MCF 10A (cell line): ENCODE measurements at regions of chr9 and their contacts with region 1.

Region 1: DNA sequence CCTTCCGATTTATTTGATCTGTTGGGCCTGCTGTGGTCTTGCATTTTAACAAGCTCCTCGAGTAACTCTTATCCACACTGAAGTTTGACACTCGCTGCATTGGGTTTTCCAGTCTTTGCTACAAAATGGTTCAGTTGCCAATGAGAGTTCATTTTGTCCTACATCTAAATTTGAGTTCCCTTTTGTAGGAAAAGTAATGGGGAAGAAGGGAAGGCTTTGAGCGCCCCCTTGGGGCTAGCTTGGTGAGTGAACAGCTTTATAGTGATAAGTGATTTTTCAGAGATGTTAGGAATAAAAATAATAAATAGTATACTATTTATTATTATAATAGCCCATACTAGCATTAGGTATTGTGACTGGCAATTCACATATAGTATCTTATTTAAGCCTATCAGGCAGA is 89.9 kb upstream of the GNAQ start:
- DNase-seq: peak; percentile 80
- H3K4me3 Mint-ChIP-seq: no peak overlapping the region
- H3K27ac Mint-ChIP-seq: no peak overlapping the region
- H3K4me1 Mint-ChIP-seq: peaks cover 30% of the 10 kb centered on the region
- H3K27me3 Mint-ChIP-seq: no peaks in the 10 kb centered on the region
- CTCF ChIP-seq: peak; percentile 66

Region 2: DNA sequence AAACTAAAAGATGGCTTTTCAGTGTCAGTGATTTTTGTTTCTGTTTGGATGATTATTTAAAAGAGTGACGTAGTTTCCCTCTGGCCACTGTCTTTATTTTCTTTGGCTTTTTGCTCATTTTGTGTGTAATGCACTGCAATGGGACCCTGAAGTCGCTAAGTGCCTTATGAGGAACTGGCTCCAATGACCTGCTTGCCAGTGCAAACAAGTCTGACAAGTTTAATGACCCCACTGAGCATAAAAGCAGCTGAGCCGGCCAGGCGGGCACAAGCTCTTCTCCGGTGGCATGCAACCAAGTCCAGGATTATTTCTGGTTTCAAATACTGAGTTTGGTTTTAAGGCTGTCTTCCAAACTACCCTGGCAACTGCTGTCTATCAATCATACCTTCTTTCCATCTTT is 457.7 kb before region 1 on chr9:
- CTCF ChIA-PET with region 1: no interaction called
- POLR2A ChIA-PET with region 1: no interaction called
- intact Hi-C with region 1: no loop called
- DNase-seq: peak; percentile 6
- H3K4me3 Mint-ChIP-seq: no peak overlapping the region
- H3K27ac Mint-ChIP-seq: no peak overlapping the region
- H3K4me1 Mint-ChIP-seq: peaks cover 9% of the 10 kb centered on the region
- H3K27me3 Mint-ChIP-seq: no peaks in the 10 kb centered on the region
- CTCF ChIP-seq: no peak

Region 3: GRCh38 chr9:77841739-77842386 is 279.6 kb before region 1 on chr9:
- CTCF ChIA-PET with region 1: interaction called, 6 read pairs
- POLR2A ChIA-PET with region 1: no interaction called
- intact Hi-C with region 1: loop called (anchors 5 kb)
- DNase-seq: no peak
- H3K4me3 Mint-ChIP-seq: no peak overlapping the region
- H3K27ac Mint-ChIP-seq: no peak overlapping the region
- H3K4me1 Mint-ChIP-seq: peaks cover 13% of the 10 kb centered on the region
- H3K27me3 Mint-ChIP-seq: no peaks in the 10 kb centered on the region
- CTCF ChIP-seq: peak; percentile 29

Region 4: DNA sequence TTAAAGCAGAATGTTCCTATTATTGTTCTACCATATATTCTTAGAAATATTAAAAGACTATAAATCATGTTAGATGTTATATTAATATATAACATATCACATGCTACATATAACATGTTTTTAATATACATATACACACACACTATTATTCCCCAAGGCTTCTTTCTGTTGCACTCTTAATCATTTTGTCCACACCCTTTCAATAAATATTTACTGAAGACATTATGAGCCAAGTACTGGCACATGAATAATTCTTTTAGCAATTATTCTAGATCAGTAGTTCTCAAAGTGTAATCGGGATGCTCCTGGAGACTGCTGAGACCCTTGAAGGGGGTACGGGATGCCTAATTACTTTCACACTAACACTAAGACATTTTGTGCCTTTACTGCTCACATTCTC is 233.8 kb before region 1 on chr9:
- CTCF ChIA-PET with region 1: no interaction called
- POLR2A ChIA-PET with region 1: no interaction called
- intact Hi-C with region 1: no loop called
- DNase-seq: no peak
- H3K4me3 Mint-ChIP-seq: no peak overlapping the region
- H3K27ac Mint-ChIP-seq: no peak overlapping the region
- H3K4me1 Mint-ChIP-seq: peaks cover 23% of the 10 kb centered on the region
- H3K27me3 Mint-ChIP-seq: no peaks in the 10 kb centered on the region
- CTCF ChIP-seq: no peak

Region 5: DNA sequence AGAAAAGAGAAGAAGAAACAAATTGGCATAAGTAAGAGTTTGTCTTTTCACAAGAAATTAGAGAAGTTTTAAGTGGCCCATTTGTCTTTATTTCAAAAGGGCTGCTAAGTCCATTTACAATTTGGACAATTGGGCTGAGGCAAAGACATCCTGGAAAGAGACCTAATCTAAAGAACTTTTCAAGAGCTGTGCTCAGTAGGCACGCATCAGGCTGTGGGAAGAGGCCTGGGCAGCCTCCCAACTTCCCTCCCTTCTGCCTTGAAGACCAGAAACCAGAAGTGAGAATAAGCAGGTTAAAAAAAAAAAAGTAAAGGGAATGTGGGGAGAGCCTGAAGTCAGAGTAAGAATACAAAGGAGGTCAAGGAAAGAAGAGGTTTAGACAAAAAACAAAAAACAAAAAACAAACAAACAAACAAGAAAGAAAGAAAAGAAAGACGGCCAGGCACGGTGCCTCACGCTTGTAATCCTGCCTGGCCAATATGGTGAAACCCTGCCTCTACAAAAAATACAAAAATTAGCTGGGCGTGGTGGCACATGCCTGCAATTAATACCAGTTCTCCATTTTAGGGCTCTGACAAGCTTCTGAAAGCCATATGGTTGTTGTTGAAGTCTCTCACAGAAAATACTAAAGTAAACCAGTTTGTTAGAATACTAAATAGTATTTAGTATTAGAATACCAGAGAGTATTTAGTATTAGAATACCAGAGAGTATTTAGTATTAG is 66.4 kb after region 1 on chr9:
- CTCF ChIA-PET with region 1: no interaction called
- POLR2A ChIA-PET with region 1: no interaction called
- intact Hi-C with region 1: no loop called
- DNase-seq: no peak
- H3K4me3 Mint-ChIP-seq: no peak overlapping the region
- H3K27ac Mint-ChIP-seq: no peak overlapping the region
- H3K4me1 Mint-ChIP-seq: no peaks in the 10 kb centered on the region
- H3K27me3 Mint-ChIP-seq: no peaks in the 10 kb centered on the region
- CTCF ChIP-seq: no peak

Region 6: GRCh38 chr9:78230761-78231160 is 109.3 kb after region 1 on chr9:
- CTCF ChIA-PET with region 1: no interaction called
- POLR2A ChIA-PET with region 1: no interaction called
- intact Hi-C with region 1: no loop called
- DNase-seq: no peak
- H3K4me3 Mint-ChIP-seq: no peak overlapping the region
- H3K27ac Mint-ChIP-seq: no peak overlapping the region
- H3K4me1 Mint-ChIP-seq: no peaks in the 10 kb centered on the region
- H3K27me3 Mint-ChIP-seq: no peaks in the 10 kb centered on the region
- CTCF ChIP-seq: no peak